ENCODE measurements at regions of chr17 and their contacts with region 1.

Region 1: DNA sequence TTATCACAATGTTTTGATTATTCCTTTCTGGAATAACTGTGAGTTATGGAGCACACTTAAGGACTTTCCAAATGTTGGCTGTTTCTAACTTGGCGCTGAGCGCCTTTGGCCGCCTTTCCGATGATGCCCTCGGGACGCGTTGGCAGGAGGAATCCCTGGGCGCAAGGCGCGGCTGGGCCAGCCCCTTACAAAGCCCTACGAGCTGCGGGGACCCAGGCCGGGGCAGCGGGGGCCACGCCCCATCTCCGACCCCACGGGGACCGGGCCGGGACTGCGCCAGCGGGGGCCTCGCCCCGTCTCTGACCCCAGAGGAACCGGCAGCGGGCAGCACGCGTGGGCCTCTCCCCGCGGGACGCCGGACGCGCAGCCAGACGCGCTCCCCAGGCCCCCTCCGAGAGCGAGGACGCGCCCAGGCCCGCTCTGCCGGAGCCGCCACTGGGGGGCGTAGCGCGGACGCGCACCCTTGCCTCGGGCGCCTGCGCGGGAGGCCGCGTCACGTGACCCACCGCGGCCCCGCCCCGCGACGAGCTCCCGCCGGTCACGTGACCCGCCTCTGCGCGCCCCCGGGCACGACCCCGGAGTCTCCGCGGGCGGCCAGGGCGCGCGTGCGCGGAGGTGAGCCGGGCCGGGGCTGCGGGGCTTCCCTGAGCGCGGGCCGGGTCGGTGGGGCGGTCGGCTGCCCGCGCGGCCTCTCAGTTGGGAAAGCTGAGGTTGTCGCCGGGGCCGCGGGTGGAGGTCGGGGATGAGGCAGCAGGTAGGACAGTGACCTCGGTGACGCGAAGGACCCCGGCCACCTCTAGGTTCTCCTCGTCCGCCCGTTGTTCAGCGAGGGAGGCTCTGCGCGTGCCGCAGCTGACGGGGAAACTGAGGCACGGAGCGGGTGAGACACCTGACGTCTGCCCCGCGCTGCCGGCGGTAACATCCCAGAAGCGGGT is at the start of gene GAA:
- DNase-seq: peak; percentile 93
- ATAC-seq: peak; percentile 89
- H3K4me3 Mint-ChIP-seq: peak within 1 kb of the TSS; percentile 84
- H3K27ac Mint-ChIP-seq: peak within 1 kb of the TSS; percentile 68
- H3K4me1 Mint-ChIP-seq: peaks cover 26% of the 10 kb centered on the region
- H3K27me3 Mint-ChIP-seq: no peaks in the 10 kb centered on the region
- total RNA-seq, gene GAA: 28.4 to 32.8 TPM

Region 2: DNA sequence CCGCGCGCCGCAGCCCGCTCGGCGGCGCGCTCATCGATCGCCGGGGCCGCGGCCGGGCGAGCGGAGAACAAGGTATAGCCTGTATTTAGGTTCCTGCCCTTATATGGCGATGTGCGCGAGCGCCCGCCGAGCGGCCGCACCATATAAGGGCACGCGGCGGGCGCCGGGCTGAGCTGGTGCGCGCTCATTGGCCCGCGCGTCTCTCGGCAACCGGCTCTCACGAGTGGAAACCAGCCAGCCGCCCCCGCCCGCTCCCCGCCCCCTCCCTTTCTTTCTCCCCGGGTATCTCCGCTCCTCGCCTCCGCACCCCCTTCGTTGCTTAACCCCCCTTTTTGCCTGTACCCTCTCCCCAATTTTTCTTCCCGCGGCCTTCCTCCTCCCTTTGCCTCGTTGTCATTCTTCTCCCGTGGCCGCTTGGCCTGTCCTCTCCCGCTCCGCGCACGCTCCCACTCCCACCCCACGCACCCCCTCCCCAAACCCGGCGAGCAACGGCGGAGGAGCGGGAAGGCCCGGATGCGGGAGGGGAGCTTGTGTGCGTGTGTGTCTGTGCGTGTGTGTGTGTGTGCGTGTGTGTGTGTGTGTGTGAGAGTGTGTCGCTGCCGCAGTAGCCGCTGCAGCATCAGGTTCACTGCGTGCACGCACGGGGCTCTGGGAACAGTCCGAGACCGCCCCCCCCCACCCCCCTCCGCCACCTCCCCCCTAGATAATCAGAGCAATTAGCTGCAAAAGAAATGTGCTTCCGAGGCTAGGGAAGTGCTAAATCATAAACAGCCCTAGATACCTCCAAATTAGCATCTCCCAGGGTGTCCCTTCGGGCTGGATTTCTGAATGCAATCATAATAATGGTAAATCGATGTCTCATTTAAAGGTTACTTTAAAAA is 290.9 kb before region 1 on chr17:
- CTCF ChIA-PET with region 1: no interaction called
- POLR2A ChIA-PET with region 1: no interaction called
- intact Hi-C with region 1: no loop called
- DNase-seq: peak; percentile 90
- ATAC-seq: peak; percentile 90
- H3K4me3 Mint-ChIP-seq: peak overlapping the region; percentile 18
- H3K27ac Mint-ChIP-seq: no peak overlapping the region
- H3K4me1 Mint-ChIP-seq: peaks cover 39% of the 10 kb centered on the region
- H3K27me3 Mint-ChIP-seq: peaks cover 59% of the 10 kb centered on the region

Region 3: DNA sequence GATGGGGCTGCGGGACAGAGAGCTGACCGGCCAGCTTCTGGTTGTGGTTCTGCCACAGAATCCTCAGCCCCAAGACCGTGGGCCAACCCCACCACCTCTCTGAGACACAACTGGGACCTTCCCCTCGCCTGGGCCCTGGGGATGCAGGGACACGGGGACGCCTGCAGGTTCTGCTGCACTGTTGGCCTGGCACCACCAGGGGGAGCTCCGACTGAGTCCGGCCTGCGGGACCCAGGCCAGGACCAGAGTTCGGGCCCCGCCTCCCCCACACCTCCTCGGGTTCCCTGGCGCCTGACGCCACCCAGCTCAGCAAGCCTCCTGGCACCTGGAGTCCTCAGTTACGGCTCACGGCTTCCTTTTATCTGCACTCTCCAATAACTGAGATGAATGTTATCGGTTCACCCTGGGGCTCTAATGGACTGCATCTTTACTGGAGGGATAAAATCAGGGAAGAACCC is 92.9 kb before region 1 on chr17:
- CTCF ChIA-PET with region 1: interaction called, 3 read pairs
- POLR2A ChIA-PET with region 1: no interaction called
- intact Hi-C with region 1: loop called in 1 of 2 experiments (anchors 5 kb)
- DNase-seq: peak; percentile 91
- ATAC-seq: peak; percentile 95
- H3K4me3 Mint-ChIP-seq: no peak overlapping the region
- H3K27ac Mint-ChIP-seq: no peak overlapping the region
- H3K4me1 Mint-ChIP-seq: peaks cover 9% of the 10 kb centered on the region
- H3K27me3 Mint-ChIP-seq: no peaks in the 10 kb centered on the region

Region 4: GRCh38 chr17:80082403-80083135 is 18.7 kb before region 1 on chr17:
- CTCF ChIA-PET with region 1: interaction called, 7 read pairs
- POLR2A ChIA-PET with region 1: interaction called, 3 read pairs
- intact Hi-C with region 1: loop called in 1 of 2 experiments (anchors 1 kb)
- DNase-seq: peak; percentile 80
- ATAC-seq: peak; percentile 91
- H3K4me3 Mint-ChIP-seq: no peak overlapping the region
- H3K27ac Mint-ChIP-seq: no peak overlapping the region
- H3K4me1 Mint-ChIP-seq: peaks cover 3% of the 10 kb centered on the region
- H3K27me3 Mint-ChIP-seq: no peaks in the 10 kb centered on the region

Region 5: GRCh38 chr17:80219013-80219762 is 117.9 kb after region 1 on chr17:
- CTCF ChIA-PET with region 1: no interaction called
- POLR2A ChIA-PET with region 1: no interaction called
- intact Hi-C with region 1: loop called in 1 of 2 experiments (anchors 1 kb)
- DNase-seq: peak; percentile 95
- ATAC-seq: peak; percentile 87
- H3K4me3 Mint-ChIP-seq: peak overlapping the region; percentile 89
- H3K27ac Mint-ChIP-seq: peak overlapping the region; percentile 92
- H3K4me1 Mint-ChIP-seq: peaks cover 27% of the 10 kb centered on the region
- H3K27me3 Mint-ChIP-seq: no peaks in the 10 kb centered on the region

Region 6: GRCh38 chr17:80414803-80415625 is 313.7 kb after region 1 on chr17 and contains the start of gene ENDOV:
- CTCF ChIA-PET with region 1: no interaction called
- POLR2A ChIA-PET with region 1: no interaction called
- intact Hi-C with region 1: loop called in 1 of 2 experiments (anchors 1 kb)
- DNase-seq: peak; percentile 95
- ATAC-seq: peak; percentile 96
- H3K4me3 Mint-ChIP-seq: peak within 1 kb of the TSS; percentile 81
- H3K27ac Mint-ChIP-seq: peak within 1 kb of the TSS; percentile 8
- H3K4me1 Mint-ChIP-seq: peaks cover 23% of the 10 kb centered on the region
- H3K27me3 Mint-ChIP-seq: peaks cover 16% of the 10 kb centered on the region
- total RNA-seq, gene ENDOV: 12.3 to 13.0 TPM

Region 7: GRCh38 chr17:80544655-80545498 is 443.6 kb after region 1 on chr17 and contains the start of gene RPTOR:
- CTCF ChIA-PET with region 1: no interaction called
- POLR2A ChIA-PET with region 1: no interaction called
- intact Hi-C with region 1: loop called in 1 of 2 experiments (anchors 10 kb)
- DNase-seq: peak; percentile 95
- ATAC-seq: peak; percentile 98
- H3K4me3 Mint-ChIP-seq: peak within 1 kb of the TSS; percentile 89
- H3K27ac Mint-ChIP-seq: peak within 1 kb of the TSS; percentile 91
- H3K4me1 Mint-ChIP-seq: peaks cover 32% of the 10 kb centered on the region
- H3K27me3 Mint-ChIP-seq: peaks cover 9% of the 10 kb centered on the region
- total RNA-seq, gene RPTOR: 48.6 to 58.1 TPM